ENCODE measurements at regions of chr1 and their contacts with region 1.

Region 1: GRCh38 chr1:206479183-206480125 is 9.2 kb downstream of the IKBKE start:
- DNase-seq: peak; percentile 70
- H3K4me3 ChIP-seq: no peak overlapping the region
- H3K27ac ChIP-seq: no peak overlapping the region
- H3K4me1 ChIP-seq: no peaks in the 10 kb centered on the region
- H3K27me3 ChIP-seq: no peaks in the 10 kb centered on the region
- CTCF ChIP-seq: peak; percentile 73 to 80 (median 79)
- EP300 ChIP-seq: no peak
- POLR2A ChIP-seq: no peak

Region 2: DNA sequence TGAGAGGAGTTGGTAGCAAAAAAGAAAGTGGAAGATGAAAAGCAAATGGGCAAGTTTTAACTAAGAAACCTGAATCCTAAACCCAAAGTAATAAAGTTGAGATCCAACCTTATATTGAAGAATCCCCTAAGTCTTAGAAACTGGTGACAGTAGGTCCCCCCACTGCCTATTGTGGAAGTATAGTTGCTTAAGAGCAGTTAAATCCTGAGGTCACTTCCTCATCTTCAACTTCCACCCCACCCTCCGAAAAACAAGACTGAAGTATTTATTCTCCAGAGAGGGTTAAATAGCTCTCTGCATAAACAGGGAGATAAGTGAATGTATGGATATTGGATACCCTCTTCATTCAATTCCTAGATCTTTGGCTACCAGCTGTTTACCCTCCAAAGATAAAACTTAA is 1264.7 kb before region 1 on chr1:
- in situ Hi-C with region 1: no loop called
- intact Hi-C with region 1: loop called (anchors 5 kb)
- DNase-seq: no peak
- H3K4me3 ChIP-seq: no peak overlapping the region
- H3K27ac ChIP-seq: no peak overlapping the region
- H3K4me1 ChIP-seq: peaks cover 0 to 17% (median 6%) of the 10 kb centered on the region in 4 donors
- H3K27me3 ChIP-seq: no peaks in the 10 kb centered on the region
- CTCF ChIP-seq: no peak
- EP300 ChIP-seq: no peak
- POLR2A ChIP-seq: no peak

Region 3: GRCh38 chr1:205438213-205439157 is 1041.0 kb before region 1 on chr1:
- in situ Hi-C with region 1: no loop called
- intact Hi-C with region 1: loop called (anchors 5 kb)
- DNase-seq: peak; percentile 87
- H3K4me3 ChIP-seq: no peak overlapping the region
- H3K27ac ChIP-seq: no peak overlapping the region
- H3K4me1 ChIP-seq: peaks cover 23 to 57% (median 39%) of the 10 kb centered on the region in 4 donors
- H3K27me3 ChIP-seq: peaks cover 9% of the 10 kb centered on the region
- CTCF ChIP-seq: peak; percentile 61 to 91 (median 71)
- EP300 ChIP-seq: no peak
- POLR2A ChIP-seq: no peak

Measured in transverse colon (tissue), 4 donors.